ENCODE measurements at regions of chr10 and their contacts with region 1.

Region 1: DNA sequence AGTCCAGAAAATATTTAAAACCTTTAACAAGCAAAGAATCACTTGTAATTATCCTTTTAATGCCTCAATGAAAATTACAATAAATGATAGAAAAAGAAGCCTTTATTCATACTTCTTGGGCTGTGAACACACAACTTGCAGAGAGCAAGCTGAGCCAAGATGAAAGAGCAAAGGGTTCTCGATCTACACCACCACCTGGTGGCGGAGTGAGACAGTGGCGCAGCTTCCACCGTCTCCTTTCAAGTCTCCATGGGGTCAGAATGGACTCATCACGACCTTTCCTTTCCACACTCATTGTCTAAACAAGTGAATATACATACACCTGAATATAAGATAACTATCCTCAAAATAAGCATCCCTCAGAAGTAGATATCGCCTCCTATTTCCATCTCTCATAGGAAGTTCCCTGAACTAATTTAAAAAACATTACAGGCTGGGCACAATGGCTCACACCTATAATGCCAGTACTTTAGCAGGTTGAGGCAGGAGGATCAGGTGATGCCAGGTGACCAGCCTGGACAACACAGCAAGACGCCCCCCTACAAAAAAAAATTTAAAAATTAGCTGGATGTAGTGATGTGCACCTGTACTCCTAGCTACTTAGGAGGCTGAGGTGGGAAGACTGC is 40.7 kb downstream of the ATE1 start:
- DNase-seq: peak; percentile 66
- H3K4me3 Mint-ChIP-seq: no peak overlapping the region
- H3K27ac Mint-ChIP-seq: no peak overlapping the region
- H3K4me1 Mint-ChIP-seq: no peaks in the 10 kb centered on the region
- H3K27me3 Mint-ChIP-seq: no peaks in the 10 kb centered on the region

Region 2: DNA sequence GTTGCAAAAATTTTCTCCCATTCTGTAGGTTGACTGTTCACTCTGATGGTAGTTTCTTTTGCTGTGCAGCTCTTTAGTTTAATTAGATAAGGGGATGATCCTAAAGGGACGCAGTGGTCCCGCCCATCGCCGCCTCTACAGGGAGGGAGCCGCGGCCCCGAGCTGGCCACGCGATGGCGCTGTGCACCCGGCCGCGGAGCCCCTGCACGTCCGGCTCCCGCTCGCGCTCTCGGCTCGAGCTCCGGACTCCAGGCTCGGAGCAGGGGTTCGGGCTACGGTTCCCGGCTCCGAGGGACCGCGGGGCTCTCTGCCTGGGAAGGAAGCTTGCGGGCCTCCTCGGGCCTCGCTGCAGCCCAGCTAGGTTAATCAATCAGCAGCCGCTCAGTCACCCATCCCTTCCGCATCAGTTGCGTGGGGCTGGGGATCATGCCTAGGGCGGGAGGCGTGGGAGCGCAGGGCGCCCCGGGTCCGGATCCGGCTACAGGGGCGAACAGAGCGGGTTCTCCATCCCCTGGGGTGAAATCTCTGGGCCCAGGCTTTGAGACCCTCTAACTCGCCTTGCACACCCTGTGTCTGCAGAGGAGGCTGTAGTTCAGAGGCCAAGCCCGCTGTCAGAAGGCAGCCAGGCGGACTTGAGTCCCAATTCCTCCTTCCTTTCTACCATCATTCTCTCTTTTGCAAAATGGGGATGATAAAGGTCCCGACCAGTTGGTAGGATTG is 938.1 kb before region 1 on chr10:
- CTCF ChIA-PET with region 1: interaction called, 10 read pairs
- DNase-seq: peak; percentile 67
- H3K4me3 Mint-ChIP-seq: no peak overlapping the region
- H3K27ac Mint-ChIP-seq: no peak overlapping the region
- H3K4me1 Mint-ChIP-seq: peaks cover 4% of the 10 kb centered on the region
- H3K27me3 Mint-ChIP-seq: peaks cover 32% of the 10 kb centered on the region

Region 3: GRCh38 chr10:121823993-121824463 is 63.1 kb before region 1 on chr10:
- CTCF ChIA-PET with region 1: interaction called, 43 read pairs
- DNase-seq: no peak
- H3K4me3 Mint-ChIP-seq: no peak overlapping the region
- H3K27ac Mint-ChIP-seq: no peak overlapping the region
- H3K4me1 Mint-ChIP-seq: no peaks in the 10 kb centered on the region
- H3K27me3 Mint-ChIP-seq: no peaks in the 10 kb centered on the region

Region 4: GRCh38 chr10:121900443-121901174 is 13.5 kb after region 1 on chr10:
- CTCF ChIA-PET with region 1: interaction called, 29 read pairs
- DNase-seq: peak; percentile 23
- H3K4me3 Mint-ChIP-seq: no peak overlapping the region
- H3K27ac Mint-ChIP-seq: no peak overlapping the region
- H3K4me1 Mint-ChIP-seq: no peaks in the 10 kb centered on the region
- H3K27me3 Mint-ChIP-seq: no peaks in the 10 kb centered on the region

Measured in activated naive CD4-positive, alpha-beta T cell treated with anti-CD3 and anti-CD28 coated beads, Interleukin-2, amount 10 ng/mL, durations not matched to agents 7 days and 5 days (primary cell).